Panc1 (cell line): ENCODE measurements at regions of chr2 and their contacts with region 1.

Region 1: GRCh38 chr2:6845312-6845711 is 20.4 kb downstream of the CMPK2 start:
- DNase-seq: no peak
- ATAC-seq: no peak
- H3K4me3 ChIP-seq: no peak overlapping the region
- H3K27ac ChIP-seq: no peak overlapping the region
- H3K4me1 ChIP-seq: no peaks in the 10 kb centered on the region
- H3K27me3 ChIP-seq: no peaks in the 10 kb centered on the region
- CTCF ChIP-seq: no peak

Region 2: DNA sequence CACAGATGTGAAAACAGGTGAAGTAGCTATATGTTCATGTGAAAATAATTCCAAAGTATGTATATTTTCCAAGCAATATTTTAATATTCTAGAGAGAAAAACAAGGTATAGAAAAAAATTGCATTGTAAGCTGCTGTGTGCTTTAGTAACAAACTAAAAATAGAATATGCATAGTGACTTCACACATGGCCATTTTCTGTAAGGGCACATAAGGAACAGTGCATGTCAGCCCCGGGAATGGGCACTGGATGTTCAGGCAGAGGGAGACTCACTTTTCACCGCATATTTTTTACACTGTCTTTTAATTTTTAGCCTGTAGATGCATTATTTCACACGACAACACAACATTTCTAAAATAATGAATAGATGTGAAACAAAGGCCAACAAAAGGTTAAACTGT is 25.6 kb before region 1 on chr2:
- CTCF ChIA-PET with region 1: no interaction called
- POLR2A ChIA-PET with region 1: no interaction called
- in situ Hi-C with region 1: no loop called
- intact Hi-C with region 1: loop called (anchors 1 kb)
- DNase-seq: no peak
- ATAC-seq: no peak
- H3K4me3 ChIP-seq: no peak overlapping the region
- H3K27ac ChIP-seq: no peak overlapping the region
- H3K4me1 ChIP-seq: no peaks in the 10 kb centered on the region
- H3K27me3 ChIP-seq: no peaks in the 10 kb centered on the region
- CTCF ChIP-seq: no peak